H1 (cell line): ENCODE measurements at regions of chr1 and their contacts with region 1.

Region 1: DNA sequence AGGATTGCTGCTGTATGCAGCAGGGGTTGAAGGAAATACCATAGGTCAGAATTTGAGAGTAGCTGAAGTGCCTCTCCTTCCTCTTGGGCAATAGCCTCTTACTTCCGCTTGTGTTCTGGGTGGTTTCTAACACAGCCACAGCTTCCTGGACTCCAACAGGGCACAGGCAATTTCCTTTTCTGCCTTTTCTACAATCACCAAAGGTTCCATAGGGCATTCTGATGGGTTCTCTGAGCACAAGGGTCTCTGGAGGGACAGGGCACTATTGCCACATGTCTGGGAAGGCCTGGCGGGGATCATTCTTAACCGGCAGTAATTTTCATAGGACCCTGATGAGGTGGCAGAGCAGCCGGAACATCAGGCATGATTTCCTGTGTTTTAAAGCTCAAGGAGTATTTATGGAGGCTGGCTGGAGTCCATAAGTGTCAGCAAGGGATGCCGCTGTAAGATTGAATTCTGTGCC is 5.5 kb upstream of the AGTRAP start:
- DNase-seq: no peak
- H3K4me3 ChIP-seq: no peak overlapping the region
- H3K27ac ChIP-seq: no peak overlapping the region
- H3K4me1 ChIP-seq: peaks cover 4 to 37% (median 26%) of the 10 kb centered on the region in 4 experiments
- H3K27me3 ChIP-seq: no peaks in the 10 kb centered on the region
- CTCF ChIP-seq: no peak
- EP300 ChIP-seq: no peak
- POLR2A ChIP-seq: no peak
- RAD21 ChIP-seq: no peak

Region 2: GRCh38 chr1:11671544-11672286 is 58.7 kb before region 1 on chr1:
- CTCF ChIA-PET with region 1: interaction called, 3 read pairs
- POLR2A ChIA-PET with region 1: interaction called, 10 read pairs
- DNase-seq: no peak
- H3K4me3 ChIP-seq: no peak overlapping the region
- H3K27ac ChIP-seq: no peak overlapping the region
- H3K4me1 ChIP-seq: no peaks in the 10 kb centered on the region; a peak in 2 of 7 replicates
- H3K27me3 ChIP-seq: no peaks in the 10 kb centered on the region
- CTCF ChIP-seq: no peak
- EP300 ChIP-seq: no peak
- POLR2A ChIP-seq: peak in 1 of 2 experiments; percentile 64; a peak in 2 of 3 replicates
- RAD21 ChIP-seq: no peak